ENCODE measurements at regions of chr17 and their contacts with region 1.

Region 1: DNA sequence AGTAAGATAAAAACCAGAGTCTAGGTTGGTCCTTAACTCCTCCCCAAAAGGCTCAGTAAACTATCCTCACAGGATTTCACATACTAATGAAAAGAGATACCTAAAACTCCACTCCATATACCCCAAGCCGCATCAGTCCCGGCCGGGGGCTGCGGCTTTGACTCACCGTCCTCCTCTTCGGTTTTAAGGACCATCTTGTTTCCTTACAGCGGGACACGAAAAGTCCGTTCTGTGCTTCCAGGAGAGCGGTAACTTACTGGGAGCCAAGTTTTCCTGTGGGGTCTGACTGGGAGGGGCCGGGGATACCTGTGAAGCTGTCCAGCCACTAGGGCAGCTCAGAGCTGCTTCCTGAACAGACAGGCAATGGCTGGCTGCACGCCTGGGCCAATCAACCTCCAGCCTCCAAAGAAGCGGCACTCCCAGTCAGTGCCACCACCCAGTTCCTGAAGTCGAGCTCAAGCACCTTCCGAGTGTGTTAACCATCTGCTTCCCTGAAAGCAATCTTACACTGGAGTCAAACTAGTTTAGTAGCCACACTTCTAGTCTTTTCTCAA is 45.5 kb downstream of the CYTH1 start:
- DNase-seq: peak; percentile 35 to 85 (median 65)
- ATAC-seq: peak; percentile 81
- H3K4me3 ChIP-seq: peak overlapping the region; percentile 63 to 72
- H3K4me3 Mint-ChIP-seq: peak overlapping the region; percentile 88
- H3K27ac ChIP-seq: peak overlapping the region; percentile 58 to 79
- H3K27ac Mint-ChIP-seq: peak overlapping the region; percentile 92
- H3K4me1 ChIP-seq: peaks cover 86% of the 10 kb centered on the region
- H3K4me1 Mint-ChIP-seq: peaks cover 88% of the 10 kb centered on the region
- H3K27me3 ChIP-seq: no peaks in the 10 kb centered on the region
- H3K27me3 Mint-ChIP-seq: no peaks in the 10 kb centered on the region
- CTCF ChIP-seq: no peak

Region 2: DNA sequence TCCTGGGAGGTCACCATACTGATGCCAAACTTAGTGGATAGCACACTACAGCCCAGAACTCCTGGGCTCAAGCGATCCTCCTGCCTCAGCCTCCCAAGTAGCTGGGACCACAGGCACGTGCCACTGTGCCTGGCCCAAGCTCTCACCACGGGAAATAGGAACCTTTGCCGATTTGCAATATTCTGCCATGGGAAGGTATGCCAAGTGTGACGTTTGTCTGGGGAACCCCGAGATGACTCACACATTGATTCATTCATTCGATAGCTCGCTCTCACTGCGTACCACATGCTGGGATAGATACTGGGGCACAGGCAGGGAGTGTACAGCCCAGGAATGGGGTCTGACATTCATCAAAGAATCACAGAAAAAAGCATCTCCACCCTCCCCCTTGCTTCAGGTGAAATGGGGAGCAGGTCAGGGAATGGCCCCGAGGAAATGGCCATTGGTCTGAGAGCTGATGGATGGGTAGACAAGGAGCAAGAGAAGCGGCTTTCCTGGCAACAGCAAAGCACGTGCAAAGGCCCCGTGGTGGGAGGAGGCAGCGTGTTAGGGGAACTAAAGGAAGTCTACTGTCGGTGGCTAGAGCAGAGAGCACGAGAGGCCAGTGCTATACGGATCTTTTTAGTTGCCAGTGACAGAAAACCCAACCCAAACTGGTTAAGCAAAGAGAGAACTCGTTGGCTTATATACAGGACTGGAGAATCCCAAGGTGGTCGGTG is 203.5 kb before region 1 on chr17:
- CTCF ChIA-PET with region 1: no interaction called
- POLR2A ChIA-PET with region 1: no interaction called
- intact Hi-C with region 1: no loop called
- DNase-seq: no peak
- ATAC-seq: no peak
- H3K4me3 ChIP-seq: no peak overlapping the region
- H3K4me3 Mint-ChIP-seq: no peak overlapping the region
- H3K27ac ChIP-seq: no peak overlapping the region
- H3K27ac Mint-ChIP-seq: no peak overlapping the region
- H3K4me1 ChIP-seq: peaks cover 15% of the 10 kb centered on the region
- H3K4me1 Mint-ChIP-seq: peaks cover 16% of the 10 kb centered on the region
- H3K27me3 ChIP-seq: no peaks in the 10 kb centered on the region
- H3K27me3 Mint-ChIP-seq: no peaks in the 10 kb centered on the region
- CTCF ChIP-seq: no peak

Region 3: GRCh38 chr17:78716814-78717393 is 19.7 kb before region 1 on chr17:
- CTCF ChIA-PET with region 1: interaction called, 6 read pairs
- POLR2A ChIA-PET with region 1: interaction called, 9 read pairs
- intact Hi-C with region 1: loop called in 1 of 2 experiments (anchors 2 kb)
- DNase-seq: peak in 3 of 9 experiments; percentile 44 to 56 (median 50)
- ATAC-seq: peak; percentile 49
- H3K4me3 ChIP-seq: peak overlapping the region in 1 of 2 experiments; percentile 10
- H3K4me3 Mint-ChIP-seq: peak overlapping the region; percentile 61
- H3K27ac ChIP-seq: peak overlapping the region in 1 of 2 experiments; percentile 47
- H3K27ac Mint-ChIP-seq: peak overlapping the region; percentile 76
- H3K4me1 ChIP-seq: peaks cover 81% of the 10 kb centered on the region
- H3K4me1 Mint-ChIP-seq: peaks cover 90% of the 10 kb centered on the region
- H3K27me3 ChIP-seq: no peaks in the 10 kb centered on the region
- H3K27me3 Mint-ChIP-seq: no peaks in the 10 kb centered on the region
- CTCF ChIP-seq: no peak

Region 4: DNA sequence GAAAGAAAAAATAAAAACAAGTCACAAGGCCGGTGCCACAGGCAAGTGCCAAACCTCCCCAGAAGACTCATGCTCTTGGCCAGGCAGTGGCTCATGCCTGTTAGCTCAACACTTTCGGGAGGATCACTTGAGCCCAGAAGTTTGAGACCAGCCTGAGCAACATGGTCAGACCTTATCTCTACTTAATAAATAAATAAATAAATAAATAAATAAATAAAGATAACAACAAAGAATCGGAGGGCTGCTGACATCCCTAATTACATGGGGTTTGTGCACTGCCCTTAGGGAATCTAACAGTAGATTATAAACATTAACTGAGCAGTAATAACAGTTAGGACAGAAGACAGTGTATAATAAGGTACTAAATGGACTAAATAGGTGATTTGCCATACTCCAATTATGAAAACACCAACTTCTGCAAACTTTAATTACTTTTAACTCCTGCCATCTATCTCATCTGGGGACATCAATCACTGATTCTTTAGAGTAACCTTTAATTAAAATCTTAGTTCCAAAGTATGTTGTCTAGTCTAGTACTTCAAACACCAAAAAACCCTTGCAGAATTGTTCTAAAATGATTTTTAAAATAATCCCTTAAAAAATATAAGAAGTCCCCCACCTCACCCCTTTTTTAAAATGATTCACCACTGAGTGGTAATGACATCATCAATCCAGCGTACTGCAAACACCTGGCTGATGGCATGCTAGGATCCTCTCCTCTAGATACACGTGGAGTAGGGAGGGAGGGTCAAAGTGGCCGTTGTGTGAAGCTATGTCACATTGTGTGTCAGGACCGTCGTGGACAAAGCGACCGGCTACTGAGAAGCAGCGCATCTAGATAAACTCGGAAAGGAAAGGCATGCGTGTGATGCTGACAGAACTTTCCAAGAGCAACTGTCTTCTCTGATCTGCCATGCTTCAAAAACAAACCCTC is 17.0 kb after region 1 on chr17:
- CTCF ChIA-PET with region 1: interaction called, 16 read pairs
- POLR2A ChIA-PET with region 1: interaction called, 10 read pairs
- intact Hi-C with region 1: loop called in 1 of 2 experiments (anchors 2 kb)
- DNase-seq: peak in 4 of 9 experiments; percentile 48 to 74 (median 52)
- ATAC-seq: peak; percentile 55
- H3K4me3 ChIP-seq: peak overlapping the region in 1 of 2 experiments; percentile 31
- H3K4me3 Mint-ChIP-seq: peak overlapping the region; percentile 69
- H3K27ac ChIP-seq: peak overlapping the region; percentile 50 to 56
- H3K27ac Mint-ChIP-seq: peak overlapping the region; percentile 95
- H3K4me1 ChIP-seq: peaks cover 91% of the 10 kb centered on the region
- H3K4me1 Mint-ChIP-seq: peaks cover 83% of the 10 kb centered on the region
- H3K27me3 ChIP-seq: no peaks in the 10 kb centered on the region
- H3K27me3 Mint-ChIP-seq: no peaks in the 10 kb centered on the region
- CTCF ChIP-seq: no peak

Region 5: GRCh38 chr17:78840725-78841611 is 104.4 kb after region 1 on chr17 and contains the start of gene USP36:
- CTCF ChIA-PET with region 1: no interaction called
- POLR2A ChIA-PET with region 1: no interaction called
- intact Hi-C with region 1: no loop called
- DNase-seq: peak; percentile 99 to 100 (median 100)
- ATAC-seq: peak; percentile 84
- H3K4me3 ChIP-seq: peak within 1 kb of the TSS; percentile 70 to 86
- H3K4me3 Mint-ChIP-seq: peak within 1 kb of the TSS; percentile 99
- H3K27ac ChIP-seq: peak within 1 kb of the TSS; percentile 98
- H3K27ac Mint-ChIP-seq: peak within 1 kb of the TSS; percentile 97
- H3K4me1 ChIP-seq: peaks cover 32% of the 10 kb centered on the region
- H3K4me1 Mint-ChIP-seq: peaks cover 49% of the 10 kb centered on the region
- H3K27me3 ChIP-seq: no peaks in the 10 kb centered on the region
- H3K27me3 Mint-ChIP-seq: no peaks in the 10 kb centered on the region
- CTCF ChIP-seq: no peak
- total RNA-seq, gene USP36: 755 to 805 TPM

Region 6: GRCh38 chr17:78890498-78890897 is 153.9 kb after region 1 on chr17:
- CTCF ChIA-PET with region 1: no interaction called
- POLR2A ChIA-PET with region 1: no interaction called
- intact Hi-C with region 1: no loop called
- DNase-seq: peak; percentile 16 to 77 (median 47)
- ATAC-seq: peak; percentile 84
- H3K4me3 ChIP-seq: no peak overlapping the region
- H3K4me3 Mint-ChIP-seq: peak overlapping the region; percentile 47
- H3K27ac ChIP-seq: peak overlapping the region; percentile 42 to 46
- H3K27ac Mint-ChIP-seq: peak overlapping the region; percentile 91
- H3K4me1 ChIP-seq: peaks cover 29% of the 10 kb centered on the region
- H3K4me1 Mint-ChIP-seq: peaks cover 35% of the 10 kb centered on the region
- H3K27me3 ChIP-seq: peaks cover 0 to 2% of the 10 kb centered on the region in 2 experiments
- H3K27me3 Mint-ChIP-seq: no peaks in the 10 kb centered on the region
- CTCF ChIP-seq: no peak

Region 7: DNA sequence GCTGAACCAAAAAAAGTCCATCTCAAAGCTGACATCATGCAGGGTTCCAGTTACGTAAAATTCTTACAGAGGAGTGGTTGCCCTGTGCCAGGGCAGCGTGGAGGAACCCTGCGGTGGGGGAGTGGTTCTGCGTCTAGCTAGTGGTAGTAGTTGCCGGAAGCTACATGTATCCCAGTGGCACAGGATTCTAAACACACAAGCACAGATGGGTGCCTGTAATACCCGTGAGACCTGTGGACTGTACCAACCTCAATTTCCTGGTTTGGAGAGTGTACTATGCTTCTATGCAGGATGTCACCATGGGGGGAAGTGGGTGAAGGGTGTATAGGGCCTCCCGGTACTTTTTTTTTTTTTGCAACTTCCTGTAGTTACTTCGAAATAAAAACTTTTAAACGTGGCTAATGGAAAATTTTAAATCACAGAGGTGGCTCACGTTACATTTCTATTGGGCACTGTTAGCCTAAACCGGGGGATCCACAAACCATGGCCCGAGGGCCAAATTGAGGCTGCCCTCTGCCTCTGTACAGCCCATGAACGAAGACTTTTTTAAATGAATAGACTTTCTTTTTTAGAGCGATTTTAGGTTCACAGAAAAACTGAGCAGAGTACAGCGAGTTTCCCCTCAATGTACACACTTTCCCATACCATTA is 1260.5 kb after region 1 on chr17:
- CTCF ChIA-PET with region 1: no interaction called
- POLR2A ChIA-PET with region 1: no interaction called
- intact Hi-C with region 1: no loop called
- DNase-seq: peak; percentile 59 to 97 (median 77)
- ATAC-seq: peak; percentile 94
- H3K4me3 ChIP-seq: peak overlapping the region; percentile 35 to 42
- H3K4me3 Mint-ChIP-seq: peak overlapping the region; percentile 75
- H3K27ac ChIP-seq: peak overlapping the region; percentile 63 to 88
- H3K27ac Mint-ChIP-seq: peak overlapping the region; percentile 94
- H3K4me1 ChIP-seq: peaks cover 50% of the 10 kb centered on the region
- H3K4me1 Mint-ChIP-seq: peaks cover 50% of the 10 kb centered on the region
- H3K27me3 ChIP-seq: peaks cover 0 to 6% of the 10 kb centered on the region in 2 experiments
- H3K27me3 Mint-ChIP-seq: no peaks in the 10 kb centered on the region
- CTCF ChIP-seq: no peak

Measured in CD8-positive, alpha-beta T cell (primary cell).